Posterior vena cava (tissue), 2 donors: ENCODE measurements at regions of chr6 and their contacts with region 1.

Region 1: DNA sequence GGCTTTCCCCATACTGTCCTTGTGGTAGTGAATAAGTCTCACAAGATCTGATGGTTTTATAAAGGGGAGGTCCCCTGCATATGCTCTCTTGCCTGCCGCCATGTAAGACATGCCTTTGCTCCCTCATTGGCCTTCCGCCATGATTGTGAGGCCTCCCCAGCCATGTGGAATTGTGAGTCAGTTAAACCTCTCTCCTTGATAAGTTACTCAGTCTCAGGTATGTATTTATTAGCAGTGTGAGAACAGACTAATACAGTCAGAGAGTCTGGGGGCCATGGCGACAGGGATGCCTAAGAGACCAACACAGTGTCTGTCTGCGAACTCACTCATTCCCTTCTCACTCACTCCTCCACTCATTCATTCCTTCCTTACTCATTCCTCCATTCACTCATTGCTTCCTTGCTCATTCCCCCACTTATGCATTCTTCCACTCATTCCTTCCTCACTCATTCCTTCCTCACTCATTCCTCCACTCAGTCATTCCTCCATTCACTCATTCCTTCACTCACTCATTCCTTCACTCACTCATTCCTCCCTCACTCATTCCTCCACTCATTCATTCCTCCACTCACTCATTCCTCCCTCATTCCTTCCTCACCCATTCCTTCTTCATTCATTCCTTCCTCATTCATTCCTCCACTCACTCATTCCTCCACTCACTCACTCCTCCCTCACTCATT is 137.5 kb upstream of the AGPAT4 start:
- DNase-seq: no peak

Region 2: GRCh38 chr6:161462148-161462547 is 50.7 kb after region 1 on chr6:
- intact Hi-C with region 1: loop called in 1 of 2 experiments (anchors 2 kb)
- DNase-seq: no peak

Region 3: GRCh38 chr6:161522276-161522675 is 110.9 kb after region 1 on chr6:
- intact Hi-C with region 1: no loop called
- DNase-seq: no peak

Region 4: GRCh38 chr6:161829291-161829729 is 417.9 kb after region 1 on chr6:
- intact Hi-C with region 1: no loop called
- DNase-seq: no peak